Common myeloid progenitor, CD34-positive (primary cell): ENCODE measurements at regions of chr11 and their contacts with region 1.

Region 1: GRCh38 chr11:19076744-19077589 is 16.4 kb upstream of the MRGPRX2 start:
- DNase-seq: peak; percentile 32 to 61 (median 55)
- H3K4me3 ChIP-seq: no peak overlapping the region
- H3K27ac ChIP-seq: no peak overlapping the region
- H3K4me1 ChIP-seq: no peaks in the 10 kb centered on the region
- H3K27me3 ChIP-seq: no peaks in the 10 kb centered on the region

Region 2: GRCh38 chr11:18791207-18791968 is 285.6 kb before region 1 on chr11 and contains the start of gene PTPN5:
- CTCF ChIA-PET with region 1: no interaction called
- POLR2A ChIA-PET with region 1: no interaction called
- DNase-seq: peak in 2 of 3 donors; percentile 23 to 50
- H3K4me3 ChIP-seq: peak within 1 kb of the TSS in 5 of 7 experiments; percentile 26 to 73 (median 62)
- H3K27ac ChIP-seq: no peak within 1 kb of the TSS
- H3K4me1 ChIP-seq: peaks cover 0 to 19% (median 9%) of the 10 kb centered on the region in 4 experiments
- H3K27me3 ChIP-seq: peaks cover 0 to 68% (median 25%) of the 10 kb centered on the region in 5 experiments

Region 3: DNA sequence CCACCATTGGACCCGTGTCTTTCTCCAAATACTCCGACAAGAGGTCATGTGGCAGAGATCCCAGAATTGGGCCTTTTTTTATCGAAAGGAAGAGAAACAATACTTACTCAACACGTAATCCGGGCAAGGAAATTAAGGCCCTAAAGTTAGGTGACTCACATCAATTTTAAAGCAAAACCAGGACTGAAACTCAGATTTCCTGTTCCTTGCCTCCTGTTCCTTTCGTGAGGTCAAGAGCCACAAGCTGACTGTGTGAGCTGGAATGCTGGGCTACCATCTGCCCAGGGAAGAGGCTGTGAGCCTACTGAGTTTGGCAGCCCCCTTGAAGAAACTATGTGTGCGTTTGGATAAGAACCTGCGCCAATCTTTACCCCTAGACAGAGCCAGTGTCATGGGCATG is 10.7 kb after region 1 on chr11:
- CTCF ChIA-PET with region 1: interaction called, 37 read pairs
- POLR2A ChIA-PET with region 1: no interaction called
- DNase-seq: no peak
- H3K4me3 ChIP-seq: no peak overlapping the region
- H3K27ac ChIP-seq: no peak overlapping the region
- H3K4me1 ChIP-seq: no peaks in the 10 kb centered on the region
- H3K27me3 ChIP-seq: peaks cover 0 to 3% (median 0%) of the 10 kb centered on the region in 5 experiments

Region 4: DNA sequence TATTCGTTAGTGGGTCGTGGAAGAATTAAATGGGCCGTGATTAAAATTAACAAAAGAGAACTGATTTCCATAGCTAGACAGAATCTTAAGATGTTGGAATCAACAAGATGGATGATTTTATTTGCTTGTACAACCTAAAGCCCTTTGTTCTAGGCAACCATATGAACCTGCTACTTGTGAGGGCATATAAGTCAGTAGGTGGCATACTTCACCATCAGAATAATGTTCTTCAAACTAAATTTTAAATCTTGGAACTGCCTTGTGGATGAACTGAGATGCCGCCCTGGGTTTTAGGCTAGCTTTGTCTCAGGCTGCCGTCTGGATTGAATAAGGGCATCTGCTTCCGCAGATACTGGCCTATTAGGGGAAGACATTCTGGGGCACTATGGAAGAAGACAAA is 83.9 kb after region 1 on chr11:
- CTCF ChIA-PET with region 1: no interaction called
- POLR2A ChIA-PET with region 1: no interaction called
- DNase-seq: peak; percentile 33 to 66 (median 52)
- H3K4me3 ChIP-seq: no peak overlapping the region
- H3K27ac ChIP-seq: no peak overlapping the region
- H3K4me1 ChIP-seq: peaks cover 0 to 11% (median 3%) of the 10 kb centered on the region in 4 experiments
- H3K27me3 ChIP-seq: no peaks in the 10 kb centered on the region

Region 5: DNA sequence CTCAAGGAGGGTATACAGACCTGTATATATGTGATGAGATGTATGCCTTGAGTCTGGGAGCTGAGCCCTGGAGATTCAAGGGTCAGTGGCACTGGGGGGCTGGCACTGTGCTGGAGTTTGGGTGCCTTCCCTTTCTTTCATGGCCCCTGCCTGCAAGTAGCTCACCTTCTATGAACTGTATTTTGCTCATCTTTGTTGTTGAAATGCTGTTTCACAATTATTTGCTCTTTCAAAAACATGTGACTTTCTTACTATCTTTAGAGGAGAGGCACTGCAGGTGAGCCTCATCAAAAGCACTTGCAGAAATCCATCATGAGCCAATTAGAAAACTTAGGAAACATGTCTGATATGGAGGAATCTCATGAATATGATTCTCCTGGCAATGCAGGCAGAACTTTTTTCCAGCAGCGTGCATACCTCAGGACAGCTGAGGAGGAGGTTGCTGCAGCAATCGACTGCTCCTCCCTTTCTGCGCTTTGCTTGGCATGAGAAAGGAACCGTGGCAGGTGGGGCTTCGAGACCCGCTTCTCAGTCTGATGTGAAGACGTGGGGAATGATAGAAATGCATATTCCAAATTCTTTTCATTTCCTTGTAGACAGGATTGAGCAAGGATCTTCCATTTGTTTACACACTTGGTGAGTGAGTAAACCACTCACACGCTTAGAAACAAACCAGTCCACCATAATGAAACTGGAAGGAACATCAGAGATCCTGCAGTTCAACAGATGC is 342.2 kb after region 1 on chr11:
- CTCF ChIA-PET with region 1: no interaction called
- POLR2A ChIA-PET with region 1: no interaction called
- DNase-seq: no peak
- H3K4me3 ChIP-seq: no peak overlapping the region
- H3K27ac ChIP-seq: no peak overlapping the region
- H3K4me1 ChIP-seq: no peaks in the 10 kb centered on the region
- H3K27me3 ChIP-seq: no peaks in the 10 kb centered on the region

Region 6: DNA sequence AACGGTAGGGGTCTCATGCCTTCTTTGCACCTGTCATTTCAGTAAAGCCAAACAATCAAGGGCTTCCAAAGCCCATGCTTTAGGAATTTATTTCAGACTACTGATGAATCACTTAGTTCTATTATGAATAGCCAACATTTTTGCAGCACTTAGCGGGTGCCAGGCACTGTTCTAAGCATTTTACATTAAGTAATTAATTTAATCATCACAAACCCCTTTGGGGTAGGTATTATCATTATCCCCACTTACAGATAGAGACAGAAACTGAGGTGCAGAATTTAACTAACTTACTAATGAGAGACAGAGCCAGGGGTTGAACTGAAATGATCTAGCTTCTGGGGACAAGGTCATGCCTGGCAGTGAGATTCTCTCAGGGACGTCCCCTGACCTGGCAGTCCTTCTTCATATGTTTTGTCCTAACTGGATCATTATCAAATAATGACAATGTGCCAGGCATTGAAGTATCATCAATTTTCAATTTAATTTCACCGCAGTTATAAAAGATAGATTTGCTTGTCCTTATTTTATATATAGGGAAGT is 603.9 kb after region 1 on chr11:
- CTCF ChIA-PET with region 1: no interaction called
- POLR2A ChIA-PET with region 1: no interaction called
- DNase-seq: no peak
- H3K4me3 ChIP-seq: no peak overlapping the region
- H3K27ac ChIP-seq: no peak overlapping the region
- H3K4me1 ChIP-seq: peaks cover 0 to 9% (median 2%) of the 10 kb centered on the region in 4 experiments
- H3K27me3 ChIP-seq: peaks cover 0 to 12% (median 0%) of the 10 kb centered on the region in 5 experiments